Naive thymus-derived CD4-positive, alpha-beta T cell (primary cell): ENCODE measurements at regions of chr9 and their contacts with region 1.

Region 1: DNA sequence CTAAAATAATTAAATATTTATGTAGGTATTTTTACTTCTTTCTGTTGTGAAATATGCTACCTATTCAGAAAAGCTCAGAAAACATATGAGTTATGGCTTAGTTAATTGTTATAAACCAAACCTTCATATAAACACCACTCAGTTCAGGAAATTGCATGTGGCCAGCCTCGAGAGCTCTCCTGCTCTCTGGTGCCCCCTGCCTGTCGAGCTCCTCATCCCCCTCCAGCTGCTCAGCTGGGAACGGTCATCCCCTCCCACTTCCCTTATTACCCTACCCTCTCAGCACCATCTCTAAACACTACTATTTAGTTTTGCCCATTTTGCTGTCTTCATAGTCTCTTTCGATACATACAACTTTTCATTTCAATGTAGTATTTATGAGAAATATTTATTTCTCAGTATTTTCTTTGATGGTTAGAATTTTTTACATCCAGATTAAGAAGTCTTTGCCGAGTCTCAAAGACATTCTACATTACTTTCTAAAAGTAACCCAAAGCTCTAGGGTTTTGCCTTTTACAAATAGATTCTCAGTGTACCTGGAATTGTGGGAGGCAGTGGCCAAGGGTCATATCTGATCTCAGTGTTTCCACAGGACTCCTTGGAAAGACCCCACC is 51.2 kb upstream of the SEMA4D start:
- DNase-seq: peak; percentile 70 to 87 (median 81)
- ATAC-seq: peak; percentile 100
- H3K4me3 ChIP-seq: no peak overlapping the region
- H3K4me3 Mint-ChIP-seq: peak overlapping the region in 7 of 10 donors; percentile 18 to 66 (median 55)
- H3K27ac ChIP-seq: peak overlapping the region; percentile 38
- H3K27ac Mint-ChIP-seq: peak overlapping the region in 7 of 9 donors; percentile 27 to 88 (median 74)
- H3K4me1 ChIP-seq: peaks cover 11 to 22% of the 10 kb centered on the region in 2 donors
- H3K4me1 Mint-ChIP-seq: peaks cover 13 to 42% (median 31%) of the 10 kb centered on the region in 7 donors
- H3K27me3 ChIP-seq: no peaks in the 10 kb centered on the region
- H3K27me3 Mint-ChIP-seq: peaks cover 0 to 21% (median 0%) of the 10 kb centered on the region in 5 donors

Region 2: GRCh38 chr9:89375191-89375760 is 173.9 kb before region 1 on chr9:
- CTCF ChIA-PET with region 1: interaction called, 5 read pairs
- POLR2A ChIA-PET with region 1: interaction called, 5 read pairs
- intact Hi-C with region 1: loop called (anchors 1 to 2 kb)
- DNase-seq: no peak
- ATAC-seq: peak; percentile 42
- H3K4me3 ChIP-seq: no peak overlapping the region
- H3K4me3 Mint-ChIP-seq: peak overlapping the region in 3 of 10 donors; percentile 10 to 59 (median 24)
- H3K27ac ChIP-seq: peak overlapping the region; percentile 52
- H3K27ac Mint-ChIP-seq: peak overlapping the region; percentile 37 to 90 (median 83)
- H3K4me1 ChIP-seq: peaks cover 7 to 10% of the 10 kb centered on the region in 2 donors
- H3K4me1 Mint-ChIP-seq: peaks cover 22 to 68% (median 38%) of the 10 kb centered on the region in 7 donors
- H3K27me3 ChIP-seq: no peaks in the 10 kb centered on the region
- H3K27me3 Mint-ChIP-seq: no peaks in the 10 kb centered on the region

Region 3: DNA sequence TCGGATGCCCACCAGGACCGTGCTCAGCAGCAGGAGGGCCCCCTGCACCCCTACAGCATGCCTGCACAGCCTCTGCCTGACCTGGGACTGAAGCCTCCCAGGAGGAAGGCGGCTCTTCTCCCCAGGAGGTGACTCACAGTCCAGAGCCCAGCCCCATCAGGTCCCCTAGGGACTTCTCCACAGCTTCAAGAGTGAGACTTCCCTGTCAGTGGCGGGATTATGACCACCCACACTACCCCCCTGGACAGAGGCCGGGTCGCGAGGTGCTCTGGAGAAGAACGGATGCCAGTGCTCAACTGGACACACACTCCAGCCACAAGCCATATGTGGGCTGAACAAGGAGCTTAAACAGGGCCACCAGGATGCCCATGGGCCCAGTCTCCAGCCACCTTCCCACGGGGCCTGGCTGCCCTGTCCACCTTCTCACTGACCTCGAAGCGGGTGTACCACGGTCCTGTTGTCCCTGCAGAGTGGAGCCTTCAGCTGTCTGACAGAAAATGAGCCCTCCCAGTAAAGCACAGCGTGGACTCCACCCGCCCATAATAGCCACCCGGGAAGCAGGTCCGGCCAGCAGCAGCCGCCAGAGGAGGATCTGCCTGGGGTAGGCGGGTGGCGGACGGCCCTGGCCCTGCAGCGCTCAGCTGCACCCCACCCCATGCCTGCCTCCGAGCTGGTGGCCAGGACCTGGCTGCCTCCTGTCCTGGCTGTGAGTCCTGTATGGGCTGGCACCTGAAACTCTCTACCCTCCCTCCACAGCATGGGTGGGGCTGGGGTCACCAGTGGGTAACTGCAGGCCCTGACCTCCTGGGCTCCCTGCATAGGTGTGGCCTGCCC is 105.9 kb before region 1 on chr9:
- CTCF ChIA-PET with region 1: interaction called, 14 read pairs
- POLR2A ChIA-PET with region 1: interaction called, 5 read pairs
- intact Hi-C with region 1: no loop called
- DNase-seq: no peak
- ATAC-seq: peak; percentile 36
- H3K4me3 ChIP-seq: no peak overlapping the region
- H3K4me3 Mint-ChIP-seq: peak overlapping the region in 3 of 10 donors; percentile 54 to 82 (median 67)
- H3K27ac ChIP-seq: peak overlapping the region; percentile 72
- H3K27ac Mint-ChIP-seq: peak overlapping the region; percentile 76 to 99 (median 96)
- H3K4me1 ChIP-seq: peaks cover 84 to 89% of the 10 kb centered on the region in 2 donors
- H3K4me1 Mint-ChIP-seq: peaks cover 62 to 91% (median 85%) of the 10 kb centered on the region in 7 donors
- H3K27me3 ChIP-seq: no peaks in the 10 kb centered on the region
- H3K27me3 Mint-ChIP-seq: no peaks in the 10 kb centered on the region

Region 4: DNA sequence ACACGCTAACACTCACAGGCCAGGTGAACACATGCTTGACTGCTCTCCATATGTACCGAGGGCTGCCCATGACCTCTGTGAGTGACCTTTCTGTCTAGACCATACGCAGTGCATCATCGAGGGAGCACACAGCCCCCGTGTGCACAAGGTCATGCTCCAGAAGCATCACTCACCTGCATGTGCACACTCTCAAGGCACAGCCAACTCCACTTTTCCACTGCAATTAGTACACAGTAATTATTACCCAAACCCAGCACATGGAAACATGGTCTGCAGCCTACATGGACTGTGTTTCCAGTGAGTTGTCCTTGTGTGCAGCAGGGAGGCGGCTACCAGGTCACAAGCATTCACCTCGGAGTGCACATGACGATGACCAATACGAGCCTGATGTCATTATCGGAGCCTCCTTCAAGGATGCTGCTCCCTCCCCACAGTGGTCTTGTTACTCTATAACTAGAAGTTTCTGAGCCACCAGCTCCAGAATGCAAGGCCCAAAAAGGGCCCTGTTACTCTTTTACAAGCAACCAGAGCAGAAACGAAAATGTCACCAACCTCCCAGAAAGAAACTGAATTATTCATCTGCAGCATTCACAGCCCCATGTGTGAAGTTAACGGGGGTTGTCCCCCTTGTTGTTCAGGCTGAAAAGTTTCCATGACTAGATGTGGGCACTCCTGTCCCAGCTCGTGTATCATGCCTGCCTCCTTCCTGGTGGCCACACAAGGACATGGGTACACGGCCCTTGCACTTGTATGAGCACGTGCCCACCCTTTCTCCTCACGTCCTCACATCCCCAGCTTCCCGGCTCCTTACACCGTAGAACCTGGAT is 82.5 kb before region 1 on chr9:
- CTCF ChIA-PET with region 1: interaction called, 13 read pairs
- POLR2A ChIA-PET with region 1: interaction called, 10 read pairs
- intact Hi-C with region 1: loop called (anchors 1 to 2 kb)
- DNase-seq: peak in 1 of 9 donors; percentile 68
- ATAC-seq: peak; percentile 1
- H3K4me3 ChIP-seq: peak overlapping the region; percentile 43
- H3K4me3 Mint-ChIP-seq: peak overlapping the region; percentile 67 to 92 (median 86)
- H3K27ac ChIP-seq: peak overlapping the region; percentile 74
- H3K27ac Mint-ChIP-seq: peak overlapping the region; percentile 86 to 99 (median 97)
- H3K4me1 ChIP-seq: peaks cover 96 to 99% of the 10 kb centered on the region in 2 donors
- H3K4me1 Mint-ChIP-seq: peaks cover 79 to 99% (median 95%) of the 10 kb centered on the region in 7 donors
- H3K27me3 ChIP-seq: no peaks in the 10 kb centered on the region
- H3K27me3 Mint-ChIP-seq: no peaks in the 10 kb centered on the region

Region 5: GRCh38 chr9:89489548-89490530 is 59.3 kb before region 1 on chr9:
- CTCF ChIA-PET with region 1: interaction called, 19 read pairs
- POLR2A ChIA-PET with region 1: interaction called, 32 read pairs
- intact Hi-C with region 1: no loop called
- DNase-seq: peak in 8 of 9 donors; percentile 15 to 87 (median 78)
- ATAC-seq: peak; percentile 90
- H3K4me3 ChIP-seq: peak overlapping the region; percentile 22
- H3K4me3 Mint-ChIP-seq: peak overlapping the region; percentile 60 to 100 (median 88)
- H3K27ac ChIP-seq: peak overlapping the region; percentile 69
- H3K27ac Mint-ChIP-seq: peak overlapping the region; percentile 82 to 98 (median 89)
- H3K4me1 ChIP-seq: peaks cover 81 to 82% of the 10 kb centered on the region in 2 donors
- H3K4me1 Mint-ChIP-seq: peaks cover 78 to 100% (median 92%) of the 10 kb centered on the region in 7 donors
- H3K27me3 ChIP-seq: no peaks in the 10 kb centered on the region
- H3K27me3 Mint-ChIP-seq: no peaks in the 10 kb centered on the region

Region 6: DNA sequence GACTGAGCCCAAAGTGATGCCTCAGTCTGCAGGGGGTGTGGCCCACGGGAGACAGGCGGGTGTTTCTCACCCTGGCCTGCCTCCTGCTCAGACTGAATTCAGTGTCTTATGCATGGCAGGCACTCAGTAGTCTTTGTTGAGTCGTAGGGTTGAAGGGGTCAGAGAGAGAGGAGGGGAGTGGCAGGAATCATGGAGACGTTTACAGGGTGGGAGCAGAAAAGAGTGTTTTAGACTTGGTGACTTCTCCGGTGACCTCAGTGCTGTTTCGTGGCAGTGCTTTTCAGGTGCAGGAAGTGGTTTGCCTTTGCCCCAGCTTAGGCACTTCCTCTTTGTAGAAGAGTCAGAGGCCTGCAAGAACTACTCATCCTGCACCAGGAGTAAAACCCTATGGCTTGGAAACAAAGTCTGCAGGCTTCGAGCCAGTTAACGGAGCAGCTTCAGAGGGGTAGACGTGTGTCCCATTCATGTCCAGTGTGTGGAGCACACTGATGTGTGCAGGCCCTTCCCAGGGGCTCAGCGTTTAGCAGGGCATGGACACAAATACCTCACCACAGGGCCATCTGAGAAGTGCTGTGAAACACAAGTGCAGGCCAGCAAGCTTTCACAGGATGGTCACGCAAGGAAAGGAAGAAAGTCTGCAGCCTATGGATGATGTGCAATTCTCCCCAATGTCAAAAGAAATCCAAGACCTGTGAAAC is 26.7 kb before region 1 on chr9:
- CTCF ChIA-PET with region 1: interaction called, 23 read pairs
- POLR2A ChIA-PET with region 1: interaction called, 23 read pairs
- intact Hi-C with region 1: loop called in 1 of 2 experiments (anchors 1 kb)
- DNase-seq: peak; percentile 33 to 91 (median 88)
- ATAC-seq: peak; percentile 91
- H3K4me3 ChIP-seq: peak overlapping the region; percentile 40
- H3K4me3 Mint-ChIP-seq: peak overlapping the region; percentile 18 to 90 (median 82)
- H3K27ac ChIP-seq: peak overlapping the region; percentile 72
- H3K27ac Mint-ChIP-seq: peak overlapping the region; percentile 94 to 100 (median 97)
- H3K4me1 ChIP-seq: peaks cover 94 to 95% of the 10 kb centered on the region in 2 donors
- H3K4me1 Mint-ChIP-seq: peaks cover 81 to 97% (median 95%) of the 10 kb centered on the region in 7 donors
- H3K27me3 ChIP-seq: no peaks in the 10 kb centered on the region
- H3K27me3 Mint-ChIP-seq: no peaks in the 10 kb centered on the region

Region 7: GRCh38 chr9:89604729-89605464 is 55.8 kb after region 1 on chr9 and contains the start of gene GADD45G:
- CTCF ChIA-PET with region 1: no interaction called
- POLR2A ChIA-PET with region 1: no interaction called
- intact Hi-C with region 1: no loop called
- DNase-seq: peak; percentile 66 to 96 (median 80)
- ATAC-seq: peak; percentile 82
- H3K4me3 ChIP-seq: peak within 1 kb of the TSS; percentile 72
- H3K4me3 Mint-ChIP-seq: peak within 1 kb of the TSS; percentile 79 to 92 (median 88)
- H3K27ac ChIP-seq: peak within 1 kb of the TSS; percentile 36
- H3K27ac Mint-ChIP-seq: peak within 1 kb of the TSS in 8 of 9 donors; percentile 57 to 91 (median 72)
- H3K4me1 ChIP-seq: peaks cover 12 to 23% of the 10 kb centered on the region in 2 donors
- H3K4me1 Mint-ChIP-seq: peaks cover 0 to 36% (median 23%) of the 10 kb centered on the region in 7 donors
- H3K27me3 ChIP-seq: no peaks in the 10 kb centered on the region
- H3K27me3 Mint-ChIP-seq: peaks cover 0 to 23% (median 0%) of the 10 kb centered on the region in 5 donors
- total RNA-seq, gene GADD45G: 0.59 to 18.7 (median 4.7) TPM

Region 8: GRCh38 chr9:89941875-89942274 is 392.7 kb after region 1 on chr9:
- CTCF ChIA-PET with region 1: no interaction called
- POLR2A ChIA-PET with region 1: no interaction called
- intact Hi-C with region 1: no loop called
- DNase-seq: no peak
- ATAC-seq: no peak
- H3K4me3 ChIP-seq: no peak overlapping the region
- H3K4me3 Mint-ChIP-seq: no peak overlapping the region
- H3K27ac ChIP-seq: no peak overlapping the region
- H3K27ac Mint-ChIP-seq: no peak overlapping the region
- H3K4me1 ChIP-seq: no peaks in the 10 kb centered on the region
- H3K4me1 Mint-ChIP-seq: peaks cover 0 to 5% (median 0%) of the 10 kb centered on the region in 7 donors
- H3K27me3 ChIP-seq: no peaks in the 10 kb centered on the region
- H3K27me3 Mint-ChIP-seq: peaks cover 10 to 35% (median 19%) of the 10 kb centered on the region in 5 donors